Lower lobe of right lung (tissue), 2 donors: ENCODE measurements at regions of chr12 and their contacts with region 1.

Region 1: DNA sequence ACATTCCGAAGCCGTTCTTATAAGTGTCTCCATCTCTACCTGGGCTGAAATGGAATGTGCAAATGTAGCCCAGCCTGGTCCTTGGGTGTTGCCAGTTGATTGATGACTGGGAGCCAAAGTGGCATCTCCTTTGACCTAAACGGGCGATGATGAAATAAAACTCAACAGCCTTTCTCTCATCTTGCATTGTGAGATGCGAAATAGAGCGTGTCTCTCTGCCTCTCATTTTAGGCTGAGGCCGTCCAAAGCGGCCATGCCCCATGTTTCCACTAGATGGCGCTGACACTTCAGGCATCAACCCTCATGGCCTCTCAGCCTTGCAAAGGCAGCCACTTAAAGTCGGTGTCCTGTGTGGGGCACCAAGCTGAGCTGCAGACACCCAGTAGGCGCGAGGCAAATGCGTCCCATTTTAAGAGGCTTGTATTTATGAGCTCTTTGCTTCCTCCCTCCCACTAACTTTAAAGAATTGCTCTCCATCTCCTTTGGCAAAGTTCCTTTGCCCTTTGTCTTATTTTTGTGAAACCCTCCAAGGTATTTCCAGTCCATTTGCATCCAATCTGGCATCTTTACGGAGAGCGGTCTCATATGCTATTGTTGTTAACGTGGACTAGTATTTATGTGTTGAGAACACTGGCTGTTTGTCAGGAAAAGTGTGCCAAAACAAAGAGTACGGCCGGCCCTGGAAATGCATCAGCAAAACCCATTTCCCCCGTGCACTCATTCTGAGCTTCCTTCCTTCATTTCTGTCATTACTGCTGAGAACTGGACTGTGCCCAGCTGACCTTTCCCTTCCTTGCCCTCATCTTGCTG is 25.0 kb downstream of the GPRC5A start:
- DNase-seq: peak; percentile 84
- ATAC-seq: peak; percentile 74 to 88
- H3K4me3 ChIP-seq: no peak overlapping the region
- H3K27ac ChIP-seq: peak overlapping the region; percentile 39
- H3K4me1 ChIP-seq: peaks cover 13% of the 10 kb centered on the region
- H3K27me3 ChIP-seq: no peaks in the 10 kb centered on the region
- CTCF ChIP-seq: peak; percentile 98

Region 2: DNA sequence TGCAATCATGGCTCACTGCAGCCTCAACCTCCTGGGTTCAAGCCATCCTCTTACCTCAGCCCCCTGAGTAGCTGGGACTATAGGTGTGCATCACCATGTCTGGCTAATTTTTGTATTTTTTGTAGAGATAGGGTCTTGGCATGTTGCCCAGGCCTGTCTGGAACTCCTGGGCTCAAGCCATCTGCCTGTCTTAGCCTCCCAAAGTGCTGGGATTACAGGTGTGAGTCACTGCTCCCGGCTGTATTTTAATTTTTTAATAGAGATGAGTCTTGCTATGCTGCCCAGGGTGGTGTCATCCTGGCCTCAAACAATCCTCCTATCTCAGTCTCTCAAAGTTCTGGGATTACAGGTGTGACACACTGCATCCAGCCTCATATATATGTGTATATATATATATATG is 56.6 kb before region 1 on chr12:
- intact Hi-C with region 1: no loop called
- DNase-seq: no peak
- ATAC-seq: no peak
- H3K4me3 ChIP-seq: no peak overlapping the region
- H3K27ac ChIP-seq: no peak overlapping the region
- H3K4me1 ChIP-seq: no peaks in the 10 kb centered on the region
- H3K27me3 ChIP-seq: no peaks in the 10 kb centered on the region
- CTCF ChIP-seq: no peak

Region 3: DNA sequence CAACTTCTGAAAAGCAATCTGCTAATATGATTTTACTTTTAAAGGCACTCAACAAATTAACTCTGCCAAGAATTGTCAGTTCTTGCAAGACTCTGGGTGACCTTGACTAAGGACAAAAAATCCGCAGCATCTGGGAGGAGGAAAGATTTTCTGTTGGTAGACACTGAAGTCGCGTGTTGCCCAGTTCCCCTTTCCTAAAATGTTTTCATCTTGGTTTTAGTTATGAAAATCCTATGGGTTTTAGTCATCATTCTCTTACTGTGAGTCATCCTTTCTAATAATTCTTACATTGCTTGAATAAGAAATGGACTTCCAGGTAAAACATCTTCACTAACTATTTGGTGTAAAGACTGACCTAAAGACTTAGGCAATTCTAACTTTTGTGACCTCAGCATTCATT is 178.0 kb after region 1 on chr12:
- intact Hi-C with region 1: no loop called
- DNase-seq: no peak
- ATAC-seq: no peak
- H3K4me3 ChIP-seq: no peak overlapping the region
- H3K27ac ChIP-seq: no peak overlapping the region
- H3K4me1 ChIP-seq: peaks cover 39% of the 10 kb centered on the region
- H3K27me3 ChIP-seq: no peaks in the 10 kb centered on the region
- CTCF ChIP-seq: no peak

Region 4: GRCh38 chr12:13233830-13234641 is 317.7 kb after region 1 on chr12:
- intact Hi-C with region 1: loop called (anchors 10 kb)
- DNase-seq: no peak
- ATAC-seq: peak; percentile 70 to 79
- H3K4me3 ChIP-seq: no peak overlapping the region
- H3K27ac ChIP-seq: no peak overlapping the region
- H3K4me1 ChIP-seq: no peaks in the 10 kb centered on the region
- H3K27me3 ChIP-seq: no peaks in the 10 kb centered on the region
- CTCF ChIP-seq: peak; percentile 80